Aorta (tissue), 5 donors: ENCODE measurements at regions of chr11 and their contacts with region 1.

Region 1: DNA sequence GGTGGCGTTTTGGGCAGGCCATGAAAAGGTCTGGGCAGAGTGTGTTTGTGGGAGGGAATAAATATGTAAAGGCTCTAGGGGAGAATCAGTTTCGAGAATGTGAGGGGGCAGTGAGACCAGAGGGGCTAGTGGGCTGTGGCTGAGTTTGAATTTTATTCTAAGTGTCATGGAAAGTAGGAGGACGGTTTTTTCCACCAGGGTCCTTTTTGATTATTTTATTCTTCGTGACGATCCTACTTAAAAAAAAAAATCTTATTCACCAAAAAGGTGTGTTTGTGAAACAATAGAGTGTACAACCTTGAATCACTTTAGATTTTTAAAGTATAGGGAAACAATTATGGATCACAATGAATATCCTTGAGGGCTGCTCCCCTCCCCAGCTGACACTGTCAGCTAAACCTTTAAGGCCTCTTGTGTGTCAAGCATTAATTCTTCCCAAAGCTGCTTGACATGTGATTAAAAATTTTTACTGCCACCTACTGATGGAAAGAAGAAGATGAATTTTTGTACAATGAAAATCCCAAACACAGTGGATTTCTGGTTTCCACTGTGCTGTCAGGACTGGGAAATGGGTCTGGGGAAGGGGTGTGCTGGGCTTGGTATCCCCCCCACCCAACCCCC is 107.5 kb upstream of the OR4B1 start:
- DNase-seq: no peak
- ATAC-seq: peak; percentile 39
- H3K4me3 ChIP-seq: no peak overlapping the region
- H3K27ac ChIP-seq: no peak overlapping the region
- H3K4me1 ChIP-seq: no peaks in the 10 kb centered on the region
- H3K27me3 ChIP-seq: no peaks in the 10 kb centered on the region

Region 2: DNA sequence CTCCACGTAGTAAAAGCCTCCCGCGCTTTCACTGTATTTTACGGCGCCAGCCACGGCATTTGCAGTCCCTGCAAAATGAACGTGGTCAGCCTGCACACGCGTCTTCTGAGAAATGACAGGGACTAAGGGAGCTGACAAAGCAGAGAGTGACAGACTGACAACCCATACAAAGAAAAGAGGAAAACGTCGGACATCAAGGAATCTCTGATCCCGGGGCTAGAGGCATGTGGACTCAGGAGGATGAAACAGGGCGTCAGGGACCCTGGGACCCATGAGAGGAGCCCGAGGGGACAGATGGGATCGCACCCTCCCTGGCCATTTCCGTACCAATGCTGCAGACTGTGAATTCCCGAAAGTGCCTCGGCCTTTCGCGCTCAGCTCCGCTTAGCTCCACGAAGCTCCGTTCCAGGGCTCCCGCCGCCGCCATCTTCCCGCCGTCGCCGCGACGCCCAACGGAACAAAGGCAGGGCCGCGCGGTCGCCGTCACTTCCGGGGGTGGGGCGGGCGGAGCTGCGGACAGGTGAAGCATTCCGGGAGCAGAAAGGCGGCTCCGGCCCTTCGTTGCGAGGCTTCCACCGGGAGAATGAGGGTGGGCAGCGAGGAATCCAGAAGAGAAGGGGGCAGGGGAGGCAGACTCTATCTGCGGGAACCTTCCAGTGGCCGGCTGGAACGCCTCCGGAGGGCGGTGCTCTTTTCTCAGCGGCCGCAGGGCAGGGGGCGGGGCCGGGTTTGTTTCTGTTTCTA is 261.1 kb before region 1 on chr11 and contains the start of gene NUP160:
- intact Hi-C with region 1: loop called (anchors 10 kb)
- DNase-seq: peak; percentile 91 to 95
- ATAC-seq: peak; percentile 96
- H3K4me3 ChIP-seq: peak within 1 kb of the TSS; percentile 68 to 73
- H3K27ac ChIP-seq: peak within 1 kb of the TSS in 1 of 2 donors; percentile 82
- H3K4me1 ChIP-seq: no peaks in the 10 kb centered on the region
- H3K27me3 ChIP-seq: no peaks in the 10 kb centered on the region
- total RNA-seq, gene NUP160: 27.5 to 38.2 TPM

Region 3: GRCh38 chr11:47932544-47932943 is 176.6 kb before region 1 on chr11:
- intact Hi-C with region 1: loop called (anchors 2 to 5 kb)
- DNase-seq: no peak
- ATAC-seq: no peak
- H3K4me3 ChIP-seq: no peak overlapping the region
- H3K27ac ChIP-seq: no peak overlapping the region
- H3K4me1 ChIP-seq: no peaks in the 10 kb centered on the region
- H3K27me3 ChIP-seq: no peaks in the 10 kb centered on the region

Region 4: DNA sequence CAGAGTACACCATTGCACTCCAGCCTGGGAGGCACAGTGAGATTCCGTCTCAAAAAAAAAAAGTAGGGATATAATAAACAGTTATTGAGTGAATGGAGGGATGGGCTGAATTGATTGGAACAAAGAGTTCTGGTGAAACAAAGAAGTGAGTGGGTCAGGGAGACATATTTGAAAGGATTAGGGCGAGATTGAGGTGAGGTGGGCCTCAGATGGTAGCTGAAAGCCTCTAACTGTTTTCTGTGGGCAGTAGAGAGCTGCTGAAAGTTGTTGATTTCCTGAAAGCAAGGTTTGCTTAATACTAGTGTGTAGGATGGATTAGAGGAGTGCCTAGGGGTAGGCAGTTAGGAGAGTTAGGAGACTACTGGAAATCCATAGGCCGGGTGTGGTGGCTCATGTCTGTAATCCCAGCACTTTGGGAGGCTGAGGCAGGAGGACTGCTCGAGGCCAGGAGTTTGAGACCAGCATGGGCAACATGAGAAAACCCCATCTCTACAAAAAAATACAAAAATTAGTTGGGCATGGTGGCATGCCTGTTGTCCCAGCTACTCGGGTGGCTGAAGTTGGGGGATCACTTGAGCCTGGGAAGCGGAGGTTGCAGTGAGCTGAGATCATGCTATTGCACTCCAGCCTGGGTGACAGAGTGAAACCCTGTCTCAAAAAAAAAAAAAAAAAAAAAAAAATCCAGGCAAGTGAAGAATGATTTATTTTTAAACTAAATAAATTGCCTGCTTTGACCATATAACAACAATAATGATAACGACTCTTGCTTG is 170.2 kb before region 1 on chr11:
- intact Hi-C with region 1: loop called (anchors 2 to 5 kb)
- DNase-seq: no peak
- ATAC-seq: no peak
- H3K4me3 ChIP-seq: no peak overlapping the region
- H3K27ac ChIP-seq: no peak overlapping the region
- H3K4me1 ChIP-seq: no peaks in the 10 kb centered on the region
- H3K27me3 ChIP-seq: no peaks in the 10 kb centered on the region

Region 5: DNA sequence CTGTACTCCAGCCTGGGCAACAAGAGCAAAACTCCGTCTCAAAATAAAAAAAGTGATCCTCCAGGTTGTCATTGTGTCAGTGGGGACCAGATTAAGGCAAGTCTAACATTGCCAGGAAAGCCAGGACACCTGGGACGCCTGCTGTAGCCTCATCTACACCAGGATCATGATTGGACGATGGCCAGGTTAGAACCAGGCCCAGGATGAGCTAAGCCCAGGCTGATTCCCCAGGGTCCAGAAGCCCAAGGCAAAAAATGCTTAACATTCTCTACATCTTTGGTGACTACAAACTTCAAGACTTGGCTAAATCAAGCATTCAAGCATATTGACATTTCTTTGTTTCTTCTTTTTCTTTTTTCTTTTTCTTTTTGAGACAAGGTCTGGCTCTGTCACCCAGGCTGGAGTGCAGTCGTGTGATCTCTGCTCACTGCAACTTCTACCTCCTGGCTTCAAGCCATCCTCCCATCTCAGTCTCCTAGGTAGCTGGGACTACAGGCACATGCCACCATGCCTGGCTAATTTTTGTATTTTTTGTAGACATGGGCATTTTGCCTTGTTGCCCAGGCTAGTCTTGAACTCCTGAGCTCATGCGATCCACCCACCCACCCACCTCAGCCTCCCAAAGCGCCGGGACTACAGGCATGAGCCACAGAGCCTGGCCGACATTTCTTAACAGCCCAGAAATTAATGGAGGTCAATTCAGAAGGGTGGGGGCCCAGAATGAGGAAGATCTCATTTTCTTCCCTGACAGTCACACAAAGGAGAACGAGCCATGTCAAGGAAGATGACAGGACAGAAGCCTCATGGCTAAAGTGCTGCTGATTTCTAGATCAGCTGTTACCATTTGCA is 141.4 kb before region 1 on chr11:
- intact Hi-C with region 1: no loop called
- DNase-seq: no peak
- ATAC-seq: no peak
- H3K4me3 ChIP-seq: no peak overlapping the region
- H3K27ac ChIP-seq: no peak overlapping the region
- H3K4me1 ChIP-seq: no peaks in the 10 kb centered on the region
- H3K27me3 ChIP-seq: no peaks in the 10 kb centered on the region

Region 6: DNA sequence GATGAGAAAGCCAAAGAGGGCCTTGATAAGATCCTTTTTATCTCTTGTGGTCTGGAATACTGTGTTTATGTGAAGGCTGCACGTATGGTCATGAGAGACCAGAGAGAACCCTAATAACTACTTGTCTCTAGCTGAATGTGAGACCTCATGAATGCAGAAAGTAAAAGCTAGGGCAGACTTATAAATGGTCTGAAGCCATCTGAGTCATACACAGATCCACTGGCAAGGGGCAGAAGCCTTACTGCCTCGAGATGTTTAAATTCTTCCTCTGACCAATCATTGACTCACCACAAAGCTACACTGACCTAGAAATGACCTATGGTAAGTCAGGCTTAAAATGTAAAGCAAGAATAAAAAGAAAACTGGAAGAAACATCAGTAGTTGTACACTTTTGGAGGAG is 84.7 kb after region 1 on chr11:
- intact Hi-C with region 1: no loop called
- DNase-seq: no peak
- ATAC-seq: no peak
- H3K4me3 ChIP-seq: no peak overlapping the region
- H3K27ac ChIP-seq: no peak overlapping the region
- H3K4me1 ChIP-seq: no peaks in the 10 kb centered on the region
- H3K27me3 ChIP-seq: peaks cover 0 to 1% of the 10 kb centered on the region in 2 donors